ENCODE measurements at regions of chr2 and their contacts with region 1.

Region 1: DNA sequence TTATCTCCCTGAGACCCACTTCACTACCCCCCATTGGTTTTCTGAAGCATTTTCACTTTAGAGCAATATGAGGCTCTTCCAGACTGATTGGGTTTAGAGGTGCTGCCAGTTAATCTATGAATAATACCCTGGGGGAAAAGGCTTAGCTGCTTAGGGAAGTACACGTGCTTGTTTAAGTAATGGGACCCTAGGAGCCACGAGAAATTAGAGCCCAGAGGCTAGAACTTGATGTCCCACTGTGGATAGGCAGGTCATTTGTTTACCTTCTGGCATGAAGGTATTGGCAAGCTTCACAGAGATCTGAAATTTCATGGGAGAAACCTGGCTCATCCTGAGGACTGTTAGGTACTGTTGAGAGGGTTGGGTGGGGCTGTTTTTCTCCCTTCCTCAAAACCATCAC is 59.7 kb downstream of the CLIP4 start:
- DNase-seq: no peak
- H3K4me3 Mint-ChIP-seq: no peak overlapping the region
- H3K27ac Mint-ChIP-seq: no peak overlapping the region
- H3K4me1 Mint-ChIP-seq: no peaks in the 10 kb centered on the region
- H3K27me3 Mint-ChIP-seq: no peaks in the 10 kb centered on the region

Region 2: GRCh38 chr2:29130295-29130694 is 44.6 kb before region 1 on chr2:
- intact Hi-C with region 1: no loop called
- DNase-seq: no peak
- H3K4me3 Mint-ChIP-seq: peak overlapping the region; percentile 56
- H3K27ac Mint-ChIP-seq: peak overlapping the region; percentile 35
- H3K4me1 Mint-ChIP-seq: peaks cover 31% of the 10 kb centered on the region
- H3K27me3 Mint-ChIP-seq: no peaks in the 10 kb centered on the region

Region 3: GRCh38 chr2:29147963-29148362 is 27.0 kb before region 1 on chr2:
- intact Hi-C with region 1: loop called (anchors 2 kb)
- DNase-seq: no peak
- H3K4me3 Mint-ChIP-seq: no peak overlapping the region
- H3K27ac Mint-ChIP-seq: no peak overlapping the region
- H3K4me1 Mint-ChIP-seq: no peaks in the 10 kb centered on the region
- H3K27me3 Mint-ChIP-seq: no peaks in the 10 kb centered on the region

Measured in activated T-helper 1 cell treated with anti-CD3 and anti-CD28 coated beads, Interleukin-12 subunit alpha, Interleukin-12 subunit beta, Interleukin-2, Interleukin-4 antibody, amounts not matched to agents 30 ng/mL and 10 ng/mL and 1 ng/mL, durations not matched to agents 14 hours and 24 hours and 36 hours (primary cell).